Psoas muscle (tissue), 8 donors: ENCODE measurements at regions of chr17 and their contacts with region 1.

Region 1: DNA sequence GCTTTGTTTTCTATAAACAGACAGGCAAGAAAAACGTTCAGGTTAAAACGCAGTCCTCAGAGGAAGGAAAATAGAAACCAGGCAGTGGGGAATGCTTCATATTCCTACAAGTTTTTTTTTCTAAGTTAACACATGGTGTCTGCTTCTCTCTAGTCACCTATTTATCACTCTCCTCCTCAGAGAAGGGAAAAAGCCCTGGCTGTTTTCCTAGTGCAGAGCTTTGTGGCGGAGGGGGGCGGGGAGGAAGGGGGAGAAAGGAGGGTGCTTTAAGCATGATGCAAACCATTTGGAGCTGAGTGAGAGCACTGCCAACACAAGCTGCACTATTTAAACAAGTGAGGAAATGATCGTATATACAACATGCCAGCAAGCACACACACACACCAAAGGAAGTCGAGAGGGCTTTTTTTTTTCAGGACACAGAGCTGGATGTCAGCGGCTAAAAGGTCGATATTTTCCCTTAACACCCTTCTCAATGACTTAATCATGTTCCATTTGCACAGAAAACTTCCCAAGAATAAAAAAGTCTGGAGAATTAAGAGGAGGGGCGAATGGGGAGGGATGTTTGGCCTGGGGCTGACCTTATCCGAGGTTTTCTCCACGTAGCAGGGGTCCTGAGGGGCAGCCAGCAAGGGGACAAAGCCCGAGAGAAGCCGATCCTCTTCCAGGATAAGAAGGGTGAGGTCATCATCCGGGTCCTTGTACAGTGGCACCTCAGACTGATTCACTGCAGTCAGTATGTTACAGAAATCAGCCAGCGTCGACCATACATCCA is 117.4 kb downstream of the HIC1 start:
- DNase-seq: peak; percentile 65 to 78
- ATAC-seq: peak; percentile 64 to 80 (median 76)
- H3K4me3 ChIP-seq: peak overlapping the region; percentile 37
- H3K27ac ChIP-seq: peak overlapping the region; percentile 84
- H3K4me1 ChIP-seq: peaks cover 64% of the 10 kb centered on the region
- H3K27me3 ChIP-seq: no peaks in the 10 kb centered on the region
- CTCF ChIP-seq: no peak

Region 2: GRCh38 chr17:2070241-2071023 is 101.8 kb before region 1 on chr17:
- intact Hi-C with region 1: loop called in 1 of 2 experiments (anchors 5 kb)
- DNase-seq: no peak
- ATAC-seq: peak in 1 of 4 donors; percentile 21
- H3K4me3 ChIP-seq: no peak overlapping the region
- H3K27ac ChIP-seq: peak overlapping the region; percentile 76
- H3K4me1 ChIP-seq: peaks cover 7% of the 10 kb centered on the region
- H3K27me3 ChIP-seq: no peaks in the 10 kb centered on the region
- CTCF ChIP-seq: no peak

Region 3: DNA sequence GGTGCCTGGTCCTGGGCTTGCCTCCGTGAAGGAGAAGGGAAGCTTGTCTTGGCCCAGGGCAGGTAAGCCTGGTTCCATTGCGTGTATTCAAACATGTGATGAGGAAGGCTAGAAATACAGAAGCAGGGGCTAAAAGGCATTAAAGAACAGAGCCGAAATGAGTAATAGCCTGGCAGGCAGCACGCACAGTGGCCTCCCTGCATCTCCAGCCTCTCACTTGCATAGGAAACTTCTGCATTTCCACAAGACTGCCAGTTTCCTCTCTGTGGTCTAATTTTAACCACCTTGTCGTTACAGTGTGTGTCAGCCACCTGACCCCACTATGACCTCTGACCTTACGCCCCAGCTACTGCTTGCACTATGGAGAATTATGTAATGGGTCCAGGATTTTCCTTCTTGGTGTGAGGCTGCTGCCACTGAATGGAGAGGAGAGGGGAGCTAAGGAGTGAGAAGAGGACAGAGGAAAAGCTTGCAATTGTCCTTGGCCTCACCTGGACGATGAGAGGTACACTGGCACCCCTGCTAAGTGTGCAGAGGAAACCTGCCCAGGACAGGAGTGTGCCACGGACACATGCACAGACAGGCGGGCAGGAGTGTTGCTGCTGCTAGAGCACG is 84.6 kb before region 1 on chr17:
- intact Hi-C with region 1: loop called in 1 of 2 experiments (anchors 5 kb)
- DNase-seq: peak in 1 of 2 donors; percentile 69
- ATAC-seq: peak in 2 of 4 donors; percentile 10 to 29
- H3K4me3 ChIP-seq: no peak overlapping the region
- H3K27ac ChIP-seq: peak overlapping the region; percentile 77
- H3K4me1 ChIP-seq: peaks cover 59% of the 10 kb centered on the region
- H3K27me3 ChIP-seq: no peaks in the 10 kb centered on the region
- CTCF ChIP-seq: no peak

Region 4: GRCh38 chr17:2233441-2233947 is 61.2 kb after region 1 on chr17:
- intact Hi-C with region 1: loop called (anchors 5 kb)
- DNase-seq: peak; percentile 38 to 58
- ATAC-seq: peak in 2 of 4 donors; percentile 13 to 34
- H3K4me3 ChIP-seq: no peak overlapping the region
- H3K27ac ChIP-seq: peak overlapping the region; percentile 65
- H3K4me1 ChIP-seq: peaks cover 56% of the 10 kb centered on the region
- H3K27me3 ChIP-seq: no peaks in the 10 kb centered on the region
- CTCF ChIP-seq: no peak

Region 5: DNA sequence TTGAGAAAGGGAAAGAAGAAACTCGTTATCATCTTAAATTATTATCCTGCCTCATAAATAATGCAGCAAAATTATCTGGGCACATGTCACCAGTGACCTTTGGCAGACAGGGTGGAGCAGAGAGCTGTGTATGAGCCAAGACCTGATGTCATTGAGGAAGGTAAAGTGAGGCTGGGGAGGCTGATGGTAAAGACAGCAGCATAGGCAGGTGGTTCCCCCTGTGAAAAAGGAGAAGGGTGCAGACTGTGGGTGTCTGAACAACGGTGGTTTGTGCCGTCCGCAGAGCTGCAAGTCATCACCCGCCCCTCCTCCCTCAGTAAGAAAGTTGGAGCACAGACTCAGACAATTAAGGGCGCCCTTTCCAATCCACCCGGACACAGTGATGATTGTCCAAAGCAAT is 370.2 kb after region 1 on chr17:
- intact Hi-C with region 1: no loop called
- DNase-seq: no peak
- ATAC-seq: no peak
- H3K4me3 ChIP-seq: no peak overlapping the region
- H3K27ac ChIP-seq: no peak overlapping the region
- H3K4me1 ChIP-seq: no peaks in the 10 kb centered on the region
- H3K27me3 ChIP-seq: no peaks in the 10 kb centered on the region
- CTCF ChIP-seq: no peak

Region 6: GRCh38 chr17:3594051-3594800 is 1422.0 kb after region 1 on chr17:
- intact Hi-C with region 1: no loop called
- DNase-seq: no peak
- ATAC-seq: peak; percentile 24 to 42 (median 28)
- H3K4me3 ChIP-seq: no peak overlapping the region
- H3K27ac ChIP-seq: no peak overlapping the region
- H3K4me1 ChIP-seq: no peaks in the 10 kb centered on the region
- H3K27me3 ChIP-seq: no peaks in the 10 kb centered on the region
- CTCF ChIP-seq: no peak